ENCODE measurements at regions of chr12 and their contacts with region 1.

Region 1: GRCh38 chr12:42584651-42585111 is 4.9 kb downstream of the PRICKLE1 start:
- DNase-seq: no peak
- H3K4me3 ChIP-seq: no peak overlapping the region
- H3K27ac ChIP-seq: no peak overlapping the region
- H3K4me1 ChIP-seq: peaks cover 0 to 4% (median 0%) of the 10 kb centered on the region in 4 experiments; a peak in 2 of 7 replicates
- H3K27me3 ChIP-seq: peaks cover 0 to 23% (median 16%) of the 10 kb centered on the region in 4 experiments; a peak in 6 of 7 replicates
- CTCF ChIP-seq: no peak
- EP300 ChIP-seq: no peak
- POLR2A ChIP-seq: no peak
- RAD21 ChIP-seq: no peak

Region 2: DNA sequence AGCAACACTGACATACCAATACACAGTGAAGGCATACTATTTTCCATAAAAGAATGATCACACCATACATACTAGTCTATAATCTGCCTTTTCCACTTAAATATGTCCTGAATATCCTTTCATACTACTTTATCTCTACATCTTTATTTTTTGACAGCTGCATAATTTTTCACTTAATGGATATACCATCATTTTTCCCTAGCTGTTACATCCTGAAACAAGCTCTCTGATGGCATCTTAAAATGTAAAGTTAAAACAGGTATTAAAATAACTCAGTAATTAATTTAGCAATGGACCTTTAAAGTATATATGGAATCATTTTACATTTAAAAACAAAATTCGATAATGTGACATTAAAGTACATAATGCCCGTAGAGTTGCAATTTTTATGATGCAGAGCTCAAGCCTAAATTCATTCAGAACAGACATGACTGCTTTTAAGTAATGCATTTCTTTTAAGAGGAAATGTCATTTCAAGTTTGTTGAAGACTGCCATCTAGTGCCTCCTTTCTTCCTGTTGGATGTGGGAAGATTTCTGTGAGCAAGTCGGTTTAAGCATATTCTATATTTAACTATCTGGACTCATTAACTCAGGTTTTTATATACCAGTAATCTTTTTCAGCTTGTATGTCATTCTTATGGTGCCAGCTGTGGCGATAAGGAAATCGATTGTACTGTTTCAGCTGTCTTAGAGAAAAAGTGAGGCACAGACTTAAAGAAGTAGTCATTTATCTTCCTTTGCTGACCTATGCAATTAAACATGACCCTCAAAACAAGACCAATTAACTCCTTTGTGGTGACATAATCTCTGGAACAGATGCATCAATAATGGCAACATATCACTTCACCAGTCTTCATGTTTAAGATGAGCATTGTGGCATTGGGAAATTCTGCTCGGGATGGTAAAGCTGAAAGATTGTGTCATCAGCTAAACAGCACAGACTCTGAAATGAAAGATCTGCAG is 15.4 kb before region 1 on chr12:
- CTCF ChIA-PET with region 1: interaction called, 12 read pairs
- POLR2A ChIA-PET with region 1: no interaction called
- DNase-seq: no peak
- H3K4me3 ChIP-seq: no peak overlapping the region
- H3K27ac ChIP-seq: no peak overlapping the region
- H3K4me1 ChIP-seq: peaks cover 0 to 4% (median 0%) of the 10 kb centered on the region in 4 experiments; a peak in 1 of 7 replicates
- H3K27me3 ChIP-seq: no peaks in the 10 kb centered on the region
- CTCF ChIP-seq: peak in 2 of 3 experiments; percentile 36 to 63; a peak in 2 of 4 replicates
- EP300 ChIP-seq: no peak
- POLR2A ChIP-seq: no peak
- RAD21 ChIP-seq: peak; percentile 85

Region 3: DNA sequence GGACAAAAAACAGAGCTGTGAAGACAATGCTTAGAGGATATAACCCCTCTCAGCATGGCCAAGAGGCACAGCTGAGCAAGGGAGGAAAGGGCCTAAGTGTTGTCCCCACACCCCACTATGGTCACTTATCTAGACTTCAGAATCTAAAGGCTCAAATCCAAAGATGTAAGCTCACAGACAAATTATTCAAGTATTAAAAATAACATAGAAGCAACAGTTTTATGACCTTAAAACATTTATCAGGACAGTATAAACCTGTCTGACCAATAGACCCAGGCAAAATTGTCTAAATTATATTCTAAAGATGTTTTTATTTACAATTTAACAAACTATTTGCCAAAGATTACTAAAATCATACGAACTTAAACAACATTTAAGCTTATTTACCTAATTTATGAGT is 32.9 kb after region 1 on chr12:
- CTCF ChIA-PET with region 1: no interaction called
- POLR2A ChIA-PET with region 1: no interaction called
- DNase-seq: no peak
- H3K4me3 ChIP-seq: no peak overlapping the region
- H3K27ac ChIP-seq: no peak overlapping the region
- H3K4me1 ChIP-seq: peaks cover 0 to 6% (median 0%) of the 10 kb centered on the region in 4 experiments; a peak in 2 of 7 replicates
- H3K27me3 ChIP-seq: no peaks in the 10 kb centered on the region
- CTCF ChIP-seq: no peak
- EP300 ChIP-seq: no peak
- POLR2A ChIP-seq: no peak
- RAD21 ChIP-seq: no peak